HEK293 (cell line): ENCODE measurements at regions of chr19 and their contacts with region 1.

Region 1: GRCh38 chr19:54209811-54210494 is 9.3 kb downstream of the RPS9 start:
- H3K4me3 ChIP-seq: no peak overlapping the region
- H3K27ac ChIP-seq: peak overlapping the region; percentile 71
- H3K4me1 ChIP-seq: peaks cover 26% of the 10 kb centered on the region
- CTCF ChIP-seq: no peak

Region 2: GRCh38 chr19:54231077-54231931 is 21.4 kb after region 1 on chr19:
- CTCF ChIA-PET with region 1: interaction called, 14 read pairs
- POLR2A ChIA-PET with region 1: no interaction called
- H3K4me3 ChIP-seq: no peak overlapping the region
- H3K27ac ChIP-seq: no peak overlapping the region
- H3K4me1 ChIP-seq: peaks cover 2% of the 10 kb centered on the region; the same call in 1 of the 2 replicates
- CTCF ChIP-seq: peak; percentile 95